ENCODE measurements at regions of chr9 and their contacts with region 1.

Region 1: DNA sequence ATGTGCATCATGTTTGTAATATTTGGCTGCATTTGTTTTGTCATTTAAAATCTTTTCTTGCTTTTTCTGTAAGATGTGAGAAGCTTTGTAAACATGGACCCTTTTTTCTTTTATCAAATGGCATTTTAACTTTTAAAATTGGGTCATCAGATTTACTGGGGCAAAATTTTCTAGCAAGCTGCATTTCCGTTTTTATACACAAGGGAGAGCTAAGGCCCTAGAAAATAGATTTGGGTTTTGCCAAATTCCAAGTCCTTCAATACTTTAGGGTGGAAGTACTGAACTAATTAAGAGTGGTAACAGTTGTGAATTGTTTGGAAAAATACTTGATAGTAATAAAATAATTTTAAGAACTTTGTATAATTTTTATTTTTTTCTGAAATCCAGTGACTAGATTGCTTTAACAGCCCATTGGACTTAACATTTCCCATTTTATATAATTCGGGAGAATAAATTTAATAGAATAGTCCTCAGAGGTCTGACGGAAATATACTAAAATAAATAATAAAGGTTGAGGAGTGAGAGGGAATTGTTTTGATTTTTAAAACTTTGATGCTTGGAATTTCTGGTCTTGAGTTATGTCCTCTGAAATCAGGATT is 117.4 kb downstream of the SMARCA2 start:
- DNase-seq: peak in 2 of 5 donors; percentile 11 to 16
- H3K4me3 ChIP-seq: no peak overlapping the region
- H3K4me3 Mint-ChIP-seq: no peak overlapping the region
- H3K27ac ChIP-seq: no peak overlapping the region
- H3K27ac Mint-ChIP-seq: peak overlapping the region in 1 of 7 donors; percentile 37
- H3K4me1 ChIP-seq: peaks cover 7% of the 10 kb centered on the region
- H3K4me1 Mint-ChIP-seq: peaks cover 18 to 48% (median 31%) of the 10 kb centered on the region in 4 donors
- H3K27me3 ChIP-seq: no peaks in the 10 kb centered on the region
- H3K27me3 Mint-ChIP-seq: no peaks in the 10 kb centered on the region

Region 2: DNA sequence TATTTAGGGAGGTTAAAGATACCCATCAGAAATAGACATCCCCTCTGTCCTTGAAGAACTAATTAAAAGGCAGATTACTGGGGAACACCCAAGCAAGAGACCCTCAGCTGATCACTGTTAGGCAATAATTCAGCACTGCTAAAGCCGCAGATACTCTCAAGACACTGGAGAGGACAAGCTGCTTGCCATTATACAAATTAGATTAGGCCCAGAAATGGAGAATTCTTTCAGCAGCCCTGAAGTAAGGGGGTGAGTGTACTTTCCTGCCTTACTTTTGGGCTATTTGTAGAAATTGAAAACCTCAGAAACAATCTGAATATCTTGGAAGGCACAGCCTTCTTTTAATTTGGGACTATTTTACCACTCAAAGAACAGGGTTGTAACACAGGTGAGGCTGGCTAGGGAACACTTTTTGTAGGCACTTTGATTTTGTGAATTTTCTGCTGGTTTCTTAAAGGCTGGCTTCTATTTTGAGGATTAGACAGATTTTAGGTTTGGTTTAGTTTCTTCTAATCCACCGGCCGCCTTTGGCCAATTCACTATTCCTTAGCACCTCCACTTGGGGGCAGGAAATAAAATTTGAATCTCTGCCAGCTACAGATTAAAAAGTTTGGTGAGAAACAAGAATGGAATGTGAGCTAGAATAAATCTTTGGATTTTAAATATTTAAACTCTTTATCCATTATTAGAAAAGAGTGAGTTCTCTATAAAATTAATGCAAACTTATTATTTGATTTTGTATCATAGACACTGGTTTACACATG is 11.5 kb before region 1 on chr9:
- CTCF ChIA-PET with region 1: interaction called, 12 read pairs
- POLR2A ChIA-PET with region 1: no interaction called
- intact Hi-C with region 1: no loop called
- DNase-seq: no peak
- H3K4me3 ChIP-seq: no peak overlapping the region
- H3K4me3 Mint-ChIP-seq: no peak overlapping the region
- H3K27ac ChIP-seq: no peak overlapping the region
- H3K27ac Mint-ChIP-seq: peak overlapping the region in 4 of 7 donors; percentile 30 to 80 (median 45)
- H3K4me1 ChIP-seq: peaks cover 17% of the 10 kb centered on the region
- H3K4me1 Mint-ChIP-seq: peaks cover 19 to 37% (median 27%) of the 10 kb centered on the region in 4 donors
- H3K27me3 ChIP-seq: no peaks in the 10 kb centered on the region
- H3K27me3 Mint-ChIP-seq: no peaks in the 10 kb centered on the region

Region 3: DNA sequence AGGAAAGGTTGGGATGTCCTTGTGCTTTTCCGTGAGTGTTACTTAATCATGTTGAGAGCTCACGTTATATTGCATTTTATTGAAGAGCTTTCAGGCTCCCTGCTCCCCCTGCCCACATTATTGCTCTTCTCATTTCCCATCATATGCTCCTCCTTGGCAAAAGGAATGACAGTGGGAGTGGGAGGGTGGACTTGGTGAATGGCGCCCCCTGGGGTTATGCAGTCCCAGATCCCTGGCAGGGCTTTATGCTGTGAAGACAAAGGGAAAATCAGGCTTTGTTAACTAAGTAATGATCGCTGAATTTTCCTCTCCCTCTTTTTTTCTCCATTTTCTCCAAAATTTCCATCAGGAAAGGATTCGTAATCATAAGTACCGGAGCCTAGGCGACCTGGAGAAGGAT is 49.2 kb after region 1 on chr9:
- CTCF ChIA-PET with region 1: interaction called, 19 read pairs
- POLR2A ChIA-PET with region 1: no interaction called
- intact Hi-C with region 1: loop called (anchors 1 kb)
- DNase-seq: no peak
- H3K4me3 ChIP-seq: no peak overlapping the region
- H3K4me3 Mint-ChIP-seq: no peak overlapping the region
- H3K27ac ChIP-seq: no peak overlapping the region
- H3K27ac Mint-ChIP-seq: peak overlapping the region in 2 of 7 donors; percentile 30 to 57
- H3K4me1 ChIP-seq: no peaks in the 10 kb centered on the region
- H3K4me1 Mint-ChIP-seq: peaks cover 5 to 15% (median 12%) of the 10 kb centered on the region in 4 donors
- H3K27me3 ChIP-seq: no peaks in the 10 kb centered on the region
- H3K27me3 Mint-ChIP-seq: no peaks in the 10 kb centered on the region

Region 4: GRCh38 chr9:2354856-2355696 is 222.5 kb after region 1 on chr9:
- CTCF ChIA-PET with region 1: no interaction called
- POLR2A ChIA-PET with region 1: no interaction called
- intact Hi-C with region 1: no loop called
- DNase-seq: no peak
- H3K4me3 ChIP-seq: no peak overlapping the region
- H3K4me3 Mint-ChIP-seq: no peak overlapping the region
- H3K27ac ChIP-seq: no peak overlapping the region
- H3K27ac Mint-ChIP-seq: no peak overlapping the region
- H3K4me1 ChIP-seq: no peaks in the 10 kb centered on the region
- H3K4me1 Mint-ChIP-seq: no peaks in the 10 kb centered on the region
- H3K27me3 ChIP-seq: no peaks in the 10 kb centered on the region
- H3K27me3 Mint-ChIP-seq: peaks cover 8 to 15% of the 10 kb centered on the region in 2 donors